Tibial artery (tissue), 4 donors: ENCODE measurements at regions of chr16 and their contacts with region 1.

Region 1: GRCh38 chr16:77037696-77038347 is 153.2 kb upstream of the MON1B start:
- DNase-seq: no peak
- H3K4me3 ChIP-seq: no peak overlapping the region
- H3K27ac ChIP-seq: no peak overlapping the region
- H3K4me1 ChIP-seq: no peaks in the 10 kb centered on the region
- H3K27me3 ChIP-seq: no peaks in the 10 kb centered on the region
- CTCF ChIP-seq: no peak

Region 2: GRCh38 chr16:77090062-77090461 is 52.2 kb after region 1 on chr16:
- intact Hi-C with region 1: loop called (anchors 10 kb)
- DNase-seq: no peak
- H3K4me3 ChIP-seq: no peak overlapping the region
- H3K27ac ChIP-seq: no peak overlapping the region
- H3K4me1 ChIP-seq: no peaks in the 10 kb centered on the region
- H3K27me3 ChIP-seq: no peaks in the 10 kb centered on the region
- CTCF ChIP-seq: no peak